AG04450 (cell line): ENCODE measurements at regions of chr17 and their contacts with region 1.

Region 1: GRCh38 chr17:43006639-43007551 is at the start of gene IFI35:
- DNase-seq: peak; percentile 52
- H3K4me3 ChIP-seq: peak within 1 kb of the TSS; percentile 89
- H3K27ac ChIP-seq: peak within 1 kb of the TSS; percentile 94
- H3K27me3 ChIP-seq: no peaks in the 10 kb centered on the region
- CTCF ChIP-seq: peak; percentile 31
- polyA plus RNA-seq, gene IFI35: 24.1 and 25.7 TPM in 2 replicates

Region 2: DNA sequence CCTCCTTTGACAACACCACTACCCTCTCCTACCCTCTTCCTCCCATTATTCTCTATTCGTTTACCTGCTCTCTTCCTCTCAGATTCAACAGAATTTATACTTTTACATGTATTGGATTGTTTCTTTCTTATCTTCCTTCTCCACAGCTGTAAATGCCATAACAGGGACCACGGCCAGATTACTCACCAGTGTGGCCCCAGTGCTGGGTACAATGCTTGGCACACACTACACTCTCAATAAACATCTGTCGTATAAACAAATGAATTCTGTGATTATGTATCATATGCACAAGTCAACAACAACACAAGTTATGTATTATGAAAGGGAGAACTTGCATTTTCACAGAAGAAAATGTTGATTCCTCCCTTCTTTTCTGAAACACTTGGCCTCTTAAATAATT is 62.7 kb before region 1 on chr17:
- CTCF ChIA-PET with region 1: no interaction called
- POLR2A ChIA-PET with region 1: interaction called, 10 read pairs
- DNase-seq: no peak
- H3K4me3 ChIP-seq: no peak overlapping the region
- H3K27ac ChIP-seq: no peak overlapping the region
- H3K27me3 ChIP-seq: peaks cover 4% of the 10 kb centered on the region
- CTCF ChIP-seq: no peak